GM18951 (cell line): ENCODE measurements at regions of chr15 and their contacts with region 1.

Region 1: GRCh38 chr15:21261965-21262850 is 178.1 kb downstream of the POTEB3 start:
- POLR2A ChIP-seq: no peak

Region 2: GRCh38 chr15:19987389-19988048 is 1274.7 kb before region 1 on chr15:
- in situ Hi-C with region 1: no loop called
- POLR2A ChIP-seq: no peak

Region 3: GRCh38 chr15:20665641-20666040 is 596.6 kb before region 1 on chr15:
- in situ Hi-C with region 1: loop called (anchors 10 kb)
- POLR2A ChIP-seq: no peak